HEK293T (cell line): ENCODE measurements at regions of chr3 and their contacts with region 1.

Region 1: GRCh38 chr3:42600111-42600988 is at the start of gene NKTR:
- DNase-seq: peak; percentile 94

Region 2: DNA sequence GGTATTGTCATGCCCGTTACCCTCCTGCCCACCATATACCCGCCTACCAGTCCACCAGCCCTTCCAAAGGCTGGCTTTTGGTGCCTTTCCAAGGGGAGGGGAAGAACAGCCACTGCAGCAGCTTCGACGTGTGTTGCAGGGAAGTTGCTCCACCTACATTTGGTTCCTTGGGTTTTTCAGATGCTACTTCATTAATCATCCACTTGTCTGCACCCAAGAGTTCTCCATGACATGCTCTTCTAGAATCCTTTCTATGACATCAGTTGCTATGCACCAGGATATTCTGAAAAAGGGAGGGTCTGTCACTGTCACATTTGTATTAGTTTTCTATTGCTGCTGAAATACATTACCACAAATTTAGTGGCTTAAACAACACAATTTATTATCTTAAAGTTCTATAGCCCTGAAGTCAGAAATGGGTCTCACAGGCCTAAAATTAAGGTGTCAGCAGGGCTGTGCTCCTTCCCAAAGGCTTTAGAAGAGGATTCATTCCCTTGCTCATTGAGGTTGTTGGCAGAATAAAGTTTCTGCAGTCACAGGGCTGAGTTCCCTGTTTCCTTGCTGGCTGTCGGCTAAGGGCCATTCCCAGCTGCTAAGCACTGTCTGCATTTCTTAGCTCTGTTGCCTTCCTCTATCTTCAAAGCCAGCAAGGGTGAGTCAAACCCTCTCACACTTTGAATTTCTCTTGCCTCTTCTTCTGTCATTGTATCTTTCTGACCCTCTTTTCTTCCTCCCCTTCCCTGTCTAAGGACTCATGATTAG is 189.8 kb before region 1 on chr3 and contains the start of gene LYZL4:
- CTCF ChIA-PET with region 1: no interaction called
- POLR2A ChIA-PET with region 1: no interaction called
- DNase-seq: no peak

Region 3: DNA sequence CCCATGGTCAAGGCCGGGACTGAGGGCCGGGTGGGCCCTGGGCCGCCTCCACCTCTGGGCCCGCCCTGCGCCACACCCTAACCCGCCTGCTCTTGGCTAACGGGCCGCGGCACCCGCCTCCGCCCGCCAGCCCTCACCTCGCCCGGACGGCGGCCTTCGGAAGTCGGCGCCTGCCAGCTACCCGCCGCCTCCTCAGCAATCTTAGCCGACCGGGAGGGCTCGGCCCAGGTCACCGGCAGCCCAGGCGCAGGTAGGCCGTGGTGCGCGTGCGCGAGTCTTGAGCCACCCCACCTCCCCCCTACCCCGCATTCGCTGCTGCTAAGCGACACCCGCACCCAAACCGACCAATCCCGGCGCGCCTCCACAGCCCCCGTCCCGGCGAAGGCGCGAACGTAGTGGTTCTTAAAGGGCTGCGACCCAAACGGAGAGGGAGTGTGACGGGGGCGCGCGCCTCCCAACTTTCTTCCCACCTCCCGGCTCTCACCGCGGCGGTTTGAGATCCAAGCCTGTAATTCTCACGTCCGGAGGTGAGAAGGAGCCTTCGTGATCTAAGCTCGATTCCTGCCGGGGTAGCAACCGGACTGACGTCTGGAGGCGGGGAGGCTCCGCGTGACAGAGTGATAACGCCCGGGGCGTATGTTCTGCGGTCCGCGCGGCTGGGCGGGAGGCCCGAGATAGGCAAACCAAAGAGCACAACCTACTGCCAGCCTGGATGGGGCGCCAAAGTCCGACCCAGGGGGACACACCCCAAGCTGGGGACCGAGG is 18.5 kb before region 1 on chr3 and contains the start of gene SEC22C:
- CTCF ChIA-PET with region 1: no interaction called
- POLR2A ChIA-PET with region 1: interaction called, 23 read pairs
- DNase-seq: peak; percentile 98

Region 4: GRCh38 chr3:42652611-42653302 is 52.4 kb after region 1 on chr3:
- CTCF ChIA-PET with region 1: no interaction called
- POLR2A ChIA-PET with region 1: interaction called, 13 read pairs
- DNase-seq: no peak